WTC11 (cell line): ENCODE measurements at regions of chr16 and their contacts with region 1.

Region 1: DNA sequence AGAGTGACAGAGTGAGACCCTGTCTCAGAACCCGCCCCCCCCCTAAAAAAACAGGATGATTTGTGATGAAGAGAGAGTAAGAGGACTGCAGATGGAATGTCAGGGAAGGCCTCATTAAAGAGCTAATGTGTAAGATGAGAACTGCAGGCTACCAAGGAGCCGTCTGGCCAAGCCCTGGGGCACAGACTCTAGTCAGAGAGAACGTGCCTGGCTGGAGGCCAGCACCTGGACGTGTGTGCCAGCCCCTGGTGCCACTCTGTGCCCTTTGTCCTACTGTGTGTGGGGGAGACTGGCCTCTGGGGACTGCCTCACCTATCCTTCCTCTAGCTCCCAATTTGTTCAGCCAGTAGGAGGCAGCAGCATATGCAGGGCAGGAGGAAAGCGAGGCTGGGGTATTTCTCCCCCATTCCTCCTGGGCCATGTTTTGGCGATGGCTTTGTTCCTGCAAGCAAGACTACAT is 37.1 kb downstream of the KNOP1 start:
- DNase-seq: peak; percentile 50
- ATAC-seq: peak; percentile 72
- H3K4me3 Mint-ChIP-seq: no peak overlapping the region
- H3K27ac Mint-ChIP-seq: no peak overlapping the region
- H3K4me1 Mint-ChIP-seq: no peaks in the 10 kb centered on the region
- H3K27me3 Mint-ChIP-seq: no peaks in the 10 kb centered on the region
- CTCF ChIP-seq: 0 out of 2 replicates have a peak, but pooled peaks have one; percentile 29

Region 2: DNA sequence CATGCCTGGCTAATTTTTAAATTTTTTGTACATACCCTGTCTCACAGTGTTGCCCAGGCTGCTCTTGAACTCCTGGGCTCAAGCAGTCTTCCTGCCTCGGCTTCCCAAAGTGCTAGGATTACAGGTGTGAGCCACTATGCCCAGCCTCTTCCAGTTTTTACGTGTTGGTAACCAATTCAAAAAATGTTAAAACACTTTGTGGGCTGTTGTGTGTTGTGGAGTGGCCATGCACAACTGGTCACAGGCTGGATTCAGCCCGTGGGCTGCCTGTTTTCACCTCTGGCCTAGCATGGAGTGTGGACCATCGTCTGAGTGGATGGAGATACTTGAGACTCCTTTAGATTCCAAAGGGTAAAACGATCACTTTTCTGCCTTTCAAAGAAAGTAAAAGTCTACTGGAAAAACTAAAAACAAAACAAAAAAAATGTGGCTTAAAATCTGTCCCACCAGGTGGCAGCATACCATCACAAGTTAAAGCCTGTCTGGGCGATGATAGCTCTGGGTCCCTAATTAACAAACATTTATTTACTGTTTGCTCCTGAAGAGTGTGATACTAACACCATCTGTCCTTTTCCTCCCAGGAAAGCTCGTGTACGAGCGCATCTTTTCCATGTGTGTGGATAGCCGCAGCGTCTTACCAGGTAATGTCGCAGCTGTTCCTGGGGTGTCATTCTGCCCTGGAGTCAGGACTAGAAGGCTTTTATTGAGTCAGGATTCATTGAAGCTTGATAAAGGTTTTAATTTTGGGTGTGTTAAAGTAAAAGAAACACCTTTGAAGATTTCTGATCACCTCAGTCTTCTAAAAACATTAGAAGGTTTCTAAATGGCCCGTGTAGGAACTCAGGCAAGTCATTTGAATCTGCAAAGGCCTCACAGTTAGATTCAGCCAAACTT is 79.6 kb before region 1 on chr16:
- CTCF ChIA-PET with region 1: interaction called, 10 read pairs
- POLR2A ChIA-PET with region 1: no interaction called
- DNase-seq: no peak
- ATAC-seq: peak; percentile 53
- H3K4me3 Mint-ChIP-seq: no peak overlapping the region
- H3K27ac Mint-ChIP-seq: peak overlapping the region; percentile 84
- H3K4me1 Mint-ChIP-seq: peaks cover 19% of the 10 kb centered on the region
- H3K27me3 Mint-ChIP-seq: no peaks in the 10 kb centered on the region
- CTCF ChIP-seq: peak; percentile 44; the same call in 1 of the 2 replicates

Region 3: GRCh38 chr16:19691161-19691711 is 10.3 kb after region 1 on chr16:
- CTCF ChIA-PET with region 1: interaction called, 17 read pairs
- POLR2A ChIA-PET with region 1: no interaction called
- DNase-seq: no peak
- ATAC-seq: no peak
- H3K4me3 Mint-ChIP-seq: no peak overlapping the region
- H3K27ac Mint-ChIP-seq: 0 out of 2 replicates have a peak overlapping the region, but pooled peaks have one; percentile 22
- H3K4me1 Mint-ChIP-seq: peaks cover 2% of the 10 kb centered on the region; the same call in 1 of the 2 replicates
- H3K27me3 Mint-ChIP-seq: no peaks in the 10 kb centered on the region
- CTCF ChIP-seq: no peak

Region 4: GRCh38 chr16:19698480-19699465 is 17.9 kb after region 1 on chr16:
- CTCF ChIA-PET with region 1: interaction called, 11 read pairs
- POLR2A ChIA-PET with region 1: no interaction called
- DNase-seq: no peak
- ATAC-seq: no peak
- H3K4me3 Mint-ChIP-seq: no peak overlapping the region
- H3K27ac Mint-ChIP-seq: peak overlapping the region; percentile 18
- H3K4me1 Mint-ChIP-seq: no peaks in the 10 kb centered on the region
- H3K27me3 Mint-ChIP-seq: no peaks in the 10 kb centered on the region
- CTCF ChIP-seq: no peak

Region 5: DNA sequence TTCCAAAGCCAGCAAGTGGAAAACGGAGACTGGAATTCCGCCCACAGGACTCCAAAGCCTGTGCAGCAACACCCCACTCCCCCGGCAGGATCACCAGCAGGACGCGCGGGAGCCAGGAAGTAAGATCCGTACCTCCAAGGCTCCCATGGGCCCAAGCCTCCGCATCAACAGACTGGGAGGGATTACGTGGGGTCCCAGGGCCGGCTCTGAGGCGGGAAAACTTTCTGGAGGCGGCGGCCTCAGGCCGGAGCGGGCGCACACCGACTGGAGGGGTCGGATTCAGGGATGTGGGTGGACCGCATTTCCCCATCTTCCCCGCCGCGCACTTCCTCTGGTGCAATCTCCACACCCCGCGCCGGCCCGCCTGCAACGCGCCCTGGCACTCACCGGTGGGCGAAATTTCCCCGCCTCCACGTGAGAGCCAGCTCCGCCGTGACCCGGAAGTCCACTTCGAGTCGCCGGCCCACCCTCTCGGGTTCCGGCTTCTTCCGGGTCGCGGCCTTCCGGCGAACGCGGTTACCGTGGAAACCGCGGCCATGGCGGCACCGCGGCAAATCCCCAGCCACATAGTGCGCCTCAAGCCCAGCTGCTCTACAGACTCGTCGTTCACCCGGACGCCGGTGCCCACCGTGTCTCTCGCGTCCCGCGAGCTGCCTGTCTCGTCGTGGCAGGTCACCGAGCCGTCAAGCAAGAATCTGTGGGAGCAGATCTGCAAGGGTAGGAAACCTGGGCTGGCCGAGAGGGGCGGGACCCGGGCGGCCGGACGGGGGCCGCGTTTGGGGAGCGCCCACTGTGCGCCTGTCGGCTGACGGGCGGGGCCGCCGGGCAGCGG is 37.1 kb after region 1 on chr16 and contains the starts of genes IQCK and KNOP1:
- CTCF ChIA-PET with region 1: interaction called, 10 read pairs
- POLR2A ChIA-PET with region 1: no interaction called
- DNase-seq: peak; percentile 85
- ATAC-seq: peak; percentile 83
- H3K4me3 Mint-ChIP-seq: peak within 1 kb of the TSS; percentile 97
- H3K27ac Mint-ChIP-seq: peak within 1 kb of the TSS; percentile 93
- H3K4me1 Mint-ChIP-seq: peaks cover 31% of the 10 kb centered on the region
- H3K27me3 Mint-ChIP-seq: no peaks in the 10 kb centered on the region
- CTCF ChIP-seq: no peak
- total RNA-seq, gene IQCK: 5.2 to 6.0 TPM (median 5.8 TPM) in 3 replicates
- total RNA-seq, gene KNOP1: 87.4 to 102 TPM (median 93.4 TPM) in 3 replicates

Region 6: GRCh38 chr16:19860166-19861041 is 179.5 kb after region 1 on chr16:
- CTCF ChIA-PET with region 1: no interaction called
- POLR2A ChIA-PET with region 1: no interaction called
- DNase-seq: no peak
- ATAC-seq: peak; percentile 79
- H3K4me3 Mint-ChIP-seq: peak overlapping the region; percentile 51
- H3K27ac Mint-ChIP-seq: peak overlapping the region; percentile 100
- H3K4me1 Mint-ChIP-seq: peaks cover 87% of the 10 kb centered on the region
- H3K27me3 Mint-ChIP-seq: no peaks in the 10 kb centered on the region
- CTCF ChIP-seq: no peak

Region 7: DNA sequence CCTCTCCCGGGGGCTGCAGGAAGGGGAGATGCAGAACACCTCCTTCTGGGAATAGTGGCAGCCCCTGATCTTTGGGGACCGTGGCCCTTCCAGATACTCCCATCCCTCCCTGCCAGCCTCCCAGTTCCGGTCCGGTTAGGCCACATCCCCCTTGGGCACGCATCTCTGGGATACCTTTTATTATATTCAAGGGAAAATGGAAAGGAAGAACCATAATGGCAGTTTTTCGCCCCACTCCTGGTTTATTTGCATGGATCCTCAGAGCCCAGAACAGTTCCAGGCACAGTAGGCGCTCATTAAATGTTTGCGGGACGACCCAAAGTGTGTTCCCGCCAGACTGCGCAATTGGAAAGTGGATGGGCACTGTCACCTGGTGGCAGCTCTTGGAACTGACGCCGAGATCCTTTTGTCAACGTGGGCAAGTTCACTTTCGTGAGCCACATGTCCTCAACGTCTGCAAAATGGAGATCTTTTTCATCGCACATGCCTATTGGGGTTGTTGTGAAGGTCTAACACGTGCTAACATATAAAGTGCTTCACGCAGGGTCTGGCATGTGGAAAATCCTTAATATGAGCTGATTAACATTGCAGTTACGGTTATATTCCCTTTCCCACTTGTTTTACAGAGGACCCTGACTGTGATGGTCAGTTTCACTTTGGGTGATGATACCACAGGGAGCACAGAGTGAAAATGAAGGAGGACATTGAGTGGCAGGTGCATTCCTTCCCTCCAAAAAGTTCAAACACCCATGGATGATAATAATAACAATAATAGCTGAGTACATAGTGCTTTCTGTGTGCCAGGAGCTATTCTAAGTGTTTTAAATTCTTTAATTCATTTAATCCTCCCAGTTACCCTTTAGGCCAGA is 205.4 kb after region 1 on chr16:
- CTCF ChIA-PET with region 1: interaction called, 12 read pairs
- POLR2A ChIA-PET with region 1: interaction called, 5 read pairs
- DNase-seq: peak; percentile 87
- ATAC-seq: peak; percentile 8
- H3K4me3 Mint-ChIP-seq: peak overlapping the region; percentile 74
- H3K27ac Mint-ChIP-seq: no peak overlapping the region; the same call in 1 of the 2 replicates
- H3K4me1 Mint-ChIP-seq: peaks cover 31% of the 10 kb centered on the region
- H3K27me3 Mint-ChIP-seq: peaks cover 19% of the 10 kb centered on the region
- CTCF ChIP-seq: peak; percentile 97